ENCODE measurements at regions of chr13 and their contacts with region 1.

Region 1: GRCh38 chr13:50911937-50912795 is 2.6 kb downstream of the RNASEH2B start:
- DNase-seq: peak; percentile 68
- H3K4me3 ChIP-seq: peak overlapping the region in 1 of 2 experiments; percentile 40; a peak in 1 of 4 replicates
- H3K27ac ChIP-seq: no peak overlapping the region
- H3K4me1 ChIP-seq: peaks cover 7 to 25% of the 10 kb centered on the region in 2 experiments
- H3K27me3 ChIP-seq: no peaks in the 10 kb centered on the region
- CTCF ChIP-seq: peak; percentile 88
- EP300 ChIP-seq: peak in 1 of 2 experiments; percentile 31; a peak in 3 of 4 replicates
- RAD21 ChIP-seq: peak; percentile 94

Region 2: DNA sequence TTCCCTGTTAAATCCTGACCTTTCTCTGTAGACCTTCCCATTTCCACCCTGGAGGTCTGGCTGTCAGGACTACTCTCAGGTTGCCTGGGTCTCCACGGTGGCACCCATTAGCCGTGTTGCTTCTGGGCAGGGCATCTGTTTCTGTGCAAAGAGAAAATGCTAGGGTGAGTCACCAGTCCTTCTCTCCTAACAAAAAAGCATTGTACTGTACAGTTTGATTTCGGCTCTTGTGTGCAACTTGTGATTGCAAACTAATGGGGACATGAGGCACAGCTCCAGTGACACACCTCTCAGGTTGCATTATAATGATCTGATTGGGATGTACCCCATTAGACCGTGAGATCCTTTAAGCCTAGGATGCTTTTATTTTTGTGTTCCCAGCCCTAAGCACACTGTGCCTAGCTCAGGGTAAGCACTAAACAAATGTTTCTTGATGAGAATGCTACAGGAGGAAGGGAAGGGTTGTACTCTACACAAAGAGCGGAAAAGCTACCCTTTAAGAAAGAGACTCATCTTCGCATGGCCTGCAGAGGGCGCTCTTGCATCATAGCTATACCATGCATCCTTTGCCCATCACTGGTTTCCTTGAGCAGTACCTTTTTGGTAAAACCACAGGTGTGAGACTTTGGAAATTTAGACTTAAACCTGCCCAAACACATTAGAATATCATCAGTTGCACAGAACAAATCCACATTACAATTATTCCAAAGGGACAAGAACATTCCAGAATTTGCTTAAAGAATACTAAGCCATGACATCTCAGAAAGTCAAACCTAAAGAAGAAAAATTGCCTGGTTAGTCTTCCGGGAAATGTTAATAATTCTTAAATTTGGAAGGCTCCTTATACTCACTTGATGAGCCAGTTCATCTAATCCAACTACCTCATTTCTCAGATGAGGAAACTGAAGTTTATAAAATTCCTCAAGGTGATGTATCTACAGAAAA is 935.6 kb before region 1 on chr13:
- CTCF ChIA-PET with region 1: interaction called, 45 read pairs
- POLR2A ChIA-PET with region 1: no interaction called
- DNase-seq: peak; percentile 66
- H3K4me3 ChIP-seq: no peak overlapping the region; a peak in 1 of 4 replicates
- H3K27ac ChIP-seq: peak overlapping the region in 1 of 2 experiments; percentile 12; a peak in 1 of 4 replicates
- H3K4me1 ChIP-seq: peaks cover 4 to 5% of the 10 kb centered on the region in 2 experiments; a peak in 2 of 4 replicates
- H3K27me3 ChIP-seq: no peaks in the 10 kb centered on the region
- CTCF ChIP-seq: peak; percentile 97
- EP300 ChIP-seq: no peak
- RAD21 ChIP-seq: peak; percentile 94

Region 3: DNA sequence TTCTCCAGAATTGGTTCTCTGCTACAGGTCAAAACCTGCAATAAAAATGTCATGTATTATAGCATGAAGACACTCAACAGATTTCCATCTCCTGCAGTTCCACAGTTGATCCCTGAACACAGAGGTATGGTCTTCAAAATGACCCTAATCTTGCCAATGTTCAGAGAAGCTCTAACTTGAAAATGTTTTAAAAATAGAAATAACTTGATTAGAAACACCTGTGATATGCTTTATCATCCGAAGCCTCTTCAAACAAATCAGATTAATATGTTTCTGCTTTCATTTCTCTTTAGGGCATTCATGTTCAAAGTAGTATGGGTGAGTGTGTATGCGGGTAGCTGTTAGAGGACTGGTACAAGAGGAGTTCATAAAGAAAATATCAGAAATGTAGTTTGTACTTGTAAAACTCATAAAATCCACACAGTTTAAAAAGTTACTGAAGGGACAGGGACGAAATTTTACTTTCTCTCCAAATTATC is 836.5 kb before region 1 on chr13:
- CTCF ChIA-PET with region 1: interaction called, 11 read pairs
- POLR2A ChIA-PET with region 1: no interaction called
- DNase-seq: peak; percentile 32
- H3K4me3 ChIP-seq: peak overlapping the region in 1 of 2 experiments; percentile 36; a peak in 1 of 4 replicates
- H3K27ac ChIP-seq: peak overlapping the region; percentile 51 to 53; a peak in 3 of 4 replicates
- H3K4me1 ChIP-seq: peaks cover 21 to 32% of the 10 kb centered on the region in 2 experiments
- H3K27me3 ChIP-seq: no peaks in the 10 kb centered on the region
- CTCF ChIP-seq: no peak
- EP300 ChIP-seq: peak in 1 of 2 experiments; percentile 72; a peak in 2 of 4 replicates
- RAD21 ChIP-seq: no peak

Region 4: GRCh38 chr13:50284540-50284939 is 627.6 kb before region 1 on chr13:
- CTCF ChIA-PET with region 1: no interaction called
- POLR2A ChIA-PET with region 1: no interaction called
- DNase-seq: no peak
- H3K4me3 ChIP-seq: no peak overlapping the region
- H3K27ac ChIP-seq: no peak overlapping the region
- H3K4me1 ChIP-seq: no peaks in the 10 kb centered on the region; a peak in 1 of 4 replicates
- H3K27me3 ChIP-seq: no peaks in the 10 kb centered on the region
- CTCF ChIP-seq: no peak
- EP300 ChIP-seq: no peak
- RAD21 ChIP-seq: no peak

Region 5: GRCh38 chr13:50529154-50529882 is 382.8 kb before region 1 on chr13:
- CTCF ChIA-PET with region 1: interaction called, 14 read pairs
- POLR2A ChIA-PET with region 1: no interaction called
- DNase-seq: peak; percentile 37
- H3K4me3 ChIP-seq: no peak overlapping the region
- H3K27ac ChIP-seq: peak overlapping the region; percentile 19 to 60; a peak in 3 of 4 replicates
- H3K4me1 ChIP-seq: peaks cover 10 to 20% of the 10 kb centered on the region in 2 experiments; a peak in 3 of 4 replicates
- H3K27me3 ChIP-seq: no peaks in the 10 kb centered on the region
- CTCF ChIP-seq: no peak
- EP300 ChIP-seq: no peak
- RAD21 ChIP-seq: no peak

Region 6: DNA sequence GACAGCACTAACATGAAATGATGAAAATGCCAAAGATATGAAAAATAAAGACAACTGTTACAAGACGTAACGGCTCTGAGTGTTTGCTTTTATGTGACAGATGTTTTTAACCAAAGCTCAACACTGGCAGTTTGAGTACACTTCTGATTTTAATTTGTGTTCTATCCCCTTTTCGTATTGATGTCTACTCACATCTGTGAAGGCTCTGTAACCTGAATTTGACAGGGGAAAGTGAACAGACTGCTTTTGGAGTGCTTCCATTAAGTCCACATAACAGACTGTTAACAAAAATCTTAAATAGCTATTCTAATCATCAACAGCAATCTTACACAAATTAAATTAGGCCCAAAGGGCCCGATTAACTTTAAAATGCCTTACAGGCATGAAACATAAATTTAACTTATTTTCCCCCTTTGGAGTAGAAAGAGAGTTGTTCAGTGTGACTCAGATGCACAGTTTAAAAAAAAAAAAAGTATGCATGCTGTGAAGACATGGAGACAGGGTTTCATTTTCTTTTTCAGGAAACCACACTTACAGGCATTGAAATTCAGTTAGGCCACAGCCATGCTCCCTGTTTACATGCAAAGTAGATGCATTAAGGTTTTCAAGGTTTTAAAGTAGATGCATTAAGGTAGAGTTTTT is 18.8 kb before region 1 on chr13:
- CTCF ChIA-PET with region 1: interaction called, 47 read pairs
- POLR2A ChIA-PET with region 1: interaction called, 7 read pairs
- DNase-seq: peak; percentile 59
- H3K4me3 ChIP-seq: no peak overlapping the region; a peak in 1 of 4 replicates
- H3K27ac ChIP-seq: peak overlapping the region; percentile 25 to 92; a peak in 3 of 4 replicates
- H3K4me1 ChIP-seq: peaks cover 0 to 17% of the 10 kb centered on the region in 2 experiments; a peak in 2 of 4 replicates
- H3K27me3 ChIP-seq: no peaks in the 10 kb centered on the region
- CTCF ChIP-seq: no peak
- EP300 ChIP-seq: peak in 1 of 2 experiments; percentile 94; a peak in 2 of 4 replicates
- RAD21 ChIP-seq: peak; percentile 32

Region 7: GRCh38 chr13:50923272-50923671 is 11.1 kb after region 1 on chr13:
- CTCF ChIA-PET with region 1: interaction called, 30 read pairs
- POLR2A ChIA-PET with region 1: no interaction called
- DNase-seq: no peak
- H3K4me3 ChIP-seq: no peak overlapping the region
- H3K27ac ChIP-seq: no peak overlapping the region
- H3K4me1 ChIP-seq: no peaks in the 10 kb centered on the region
- H3K27me3 ChIP-seq: no peaks in the 10 kb centered on the region
- CTCF ChIP-seq: no peak
- EP300 ChIP-seq: no peak
- RAD21 ChIP-seq: no peak

Region 8: DNA sequence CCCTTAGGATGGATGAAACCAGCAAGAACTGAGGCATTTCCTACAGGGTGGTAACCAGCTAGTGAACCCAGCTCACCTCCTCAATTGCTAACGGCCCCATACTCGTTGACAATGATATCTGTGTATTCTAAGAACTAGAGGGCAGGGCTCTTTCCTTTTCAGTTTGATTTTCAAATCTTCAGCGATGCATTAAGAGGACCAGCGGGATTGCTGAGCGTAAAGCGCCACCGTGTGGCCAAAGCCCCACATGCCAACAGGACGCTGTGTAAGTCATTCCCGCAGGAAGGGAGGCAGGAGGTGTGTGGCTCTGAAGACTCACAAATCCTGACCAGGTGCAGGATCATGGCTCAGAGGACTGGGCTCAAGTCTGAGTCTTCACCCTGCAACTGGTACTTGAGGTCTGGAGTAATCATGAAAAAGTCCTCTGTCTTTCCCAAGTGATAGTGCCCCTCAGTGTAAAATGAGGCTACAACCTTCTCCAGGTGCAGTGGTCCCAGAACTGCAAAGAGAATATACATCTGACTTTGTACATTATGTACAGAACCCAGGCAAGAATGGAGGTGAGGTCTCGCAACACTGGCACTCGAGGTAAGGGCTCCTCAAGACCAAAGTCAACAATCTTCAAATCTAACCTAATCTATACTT is 158.0 kb after region 1 on chr13:
- CTCF ChIA-PET with region 1: interaction called, 32 read pairs
- POLR2A ChIA-PET with region 1: no interaction called
- DNase-seq: peak; percentile 74
- H3K4me3 ChIP-seq: no peak overlapping the region
- H3K27ac ChIP-seq: no peak overlapping the region
- H3K4me1 ChIP-seq: peaks cover 10 to 14% of the 10 kb centered on the region in 2 experiments; a peak in 2 of 4 replicates
- H3K27me3 ChIP-seq: no peaks in the 10 kb centered on the region; the same call in 1 of the 2 replicates
- CTCF ChIP-seq: peak; percentile 94
- EP300 ChIP-seq: no peak
- RAD21 ChIP-seq: peak; percentile 100